ENCODE measurements at regions of chr1 and their contacts with region 1.

Region 1: DNA sequence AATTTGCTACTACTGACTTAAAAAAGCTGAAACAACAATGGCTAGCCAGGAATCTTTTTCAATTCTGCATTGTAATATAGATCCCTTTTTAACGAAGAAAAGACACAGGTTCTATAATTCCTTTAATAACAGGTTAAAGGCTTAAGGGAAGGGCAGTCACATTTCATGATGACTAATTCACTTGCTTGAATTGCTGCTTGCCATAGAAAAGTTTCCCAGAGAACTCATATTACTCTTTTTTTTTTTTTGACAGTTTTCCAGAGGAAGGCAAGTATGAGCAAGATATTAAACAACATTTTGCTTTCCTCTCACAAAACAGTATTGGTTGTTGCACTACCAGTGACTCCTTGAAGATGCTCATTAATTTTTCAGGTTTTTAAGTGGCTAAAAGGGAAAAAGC is 60.9 kb downstream of the IL23R start:
- DNase-seq: no peak
- ATAC-seq: peak in 1 of 3 donors; percentile 8
- H3K4me3 ChIP-seq: no peak overlapping the region
- H3K4me3 Mint-ChIP-seq: peak overlapping the region; percentile 82
- H3K27ac ChIP-seq: peak overlapping the region; percentile 70
- H3K27ac Mint-ChIP-seq: peak overlapping the region; percentile 90 to 94
- H3K4me1 ChIP-seq: peaks cover 26% of the 10 kb centered on the region
- H3K4me1 Mint-ChIP-seq: peaks cover 40 to 46% of the 10 kb centered on the region in 2 donors
- H3K27me3 ChIP-seq: no peaks in the 10 kb centered on the region
- H3K27me3 Mint-ChIP-seq: no peaks in the 10 kb centered on the region
- CTCF ChIP-seq: no peak

Region 2: GRCh38 chr1:66695116-66695515 is 532.1 kb before region 1 on chr1:
- intact Hi-C with region 1: no loop called
- DNase-seq: no peak
- ATAC-seq: no peak
- H3K4me3 ChIP-seq: no peak overlapping the region
- H3K4me3 Mint-ChIP-seq: no peak overlapping the region
- H3K27ac ChIP-seq: no peak overlapping the region
- H3K27ac Mint-ChIP-seq: no peak overlapping the region
- H3K4me1 ChIP-seq: no peaks in the 10 kb centered on the region
- H3K4me1 Mint-ChIP-seq: peaks cover 0 to 4% of the 10 kb centered on the region in 2 donors
- H3K27me3 ChIP-seq: no peaks in the 10 kb centered on the region
- H3K27me3 Mint-ChIP-seq: peaks cover 7 to 9% of the 10 kb centered on the region in 2 donors
- CTCF ChIP-seq: no peak

Region 3: DNA sequence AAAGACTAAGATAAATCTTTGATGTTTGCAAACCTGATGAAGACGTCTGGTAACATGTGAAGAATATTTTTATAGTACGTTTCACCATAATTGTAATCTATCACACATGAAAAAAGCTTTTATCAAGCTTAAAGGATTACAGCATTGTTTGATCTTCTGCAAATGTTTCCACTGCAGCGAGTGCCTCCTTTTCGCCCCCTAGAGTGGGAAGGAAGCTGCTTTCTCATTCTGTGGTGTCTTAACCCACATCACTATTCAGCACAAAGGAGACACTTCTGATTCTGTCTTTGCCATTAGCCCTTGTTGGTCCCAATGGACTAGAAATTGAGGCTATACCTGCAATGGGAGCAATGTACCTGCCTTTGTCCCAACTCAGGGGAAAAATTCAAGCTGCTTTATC is 34.5 kb after region 1 on chr1:
- intact Hi-C with region 1: loop called (anchors 5 kb)
- DNase-seq: peak in 1 of 2 donors; percentile 59
- ATAC-seq: peak; percentile 50 to 69 (median 63)
- H3K4me3 ChIP-seq: no peak overlapping the region
- H3K4me3 Mint-ChIP-seq: peak overlapping the region; percentile 43
- H3K27ac ChIP-seq: no peak overlapping the region
- H3K27ac Mint-ChIP-seq: peak overlapping the region; percentile 53 to 75
- H3K4me1 ChIP-seq: peaks cover 21% of the 10 kb centered on the region
- H3K4me1 Mint-ChIP-seq: peaks cover 40 to 41% of the 10 kb centered on the region in 2 donors
- H3K27me3 ChIP-seq: no peaks in the 10 kb centered on the region
- H3K27me3 Mint-ChIP-seq: no peaks in the 10 kb centered on the region
- CTCF ChIP-seq: peak; percentile 23

Region 4: GRCh38 chr1:67274623-67275325 is 47.6 kb after region 1 on chr1:
- intact Hi-C with region 1: loop called (anchors 2 kb)
- DNase-seq: peak in 1 of 2 donors; percentile 63
- ATAC-seq: peak; percentile 89 to 99 (median 89)
- H3K4me3 ChIP-seq: no peak overlapping the region
- H3K4me3 Mint-ChIP-seq: peak overlapping the region; percentile 54
- H3K27ac ChIP-seq: peak overlapping the region; percentile 66
- H3K27ac Mint-ChIP-seq: peak overlapping the region; percentile 67 to 74
- H3K4me1 ChIP-seq: peaks cover 11% of the 10 kb centered on the region
- H3K4me1 Mint-ChIP-seq: peaks cover 35 to 36% of the 10 kb centered on the region in 2 donors
- H3K27me3 ChIP-seq: no peaks in the 10 kb centered on the region
- H3K27me3 Mint-ChIP-seq: no peaks in the 10 kb centered on the region
- CTCF ChIP-seq: no peak

Measured in natural killer cell (primary cell).